ENCODE measurements at regions of chr1 and their contacts with region 1.

Region 1: GRCh38 chr1:160951443-160952128 is 3.0 kb downstream of the ITLN2 start:
- DNase-seq: peak; percentile 69
- ATAC-seq: peak; percentile 76

Region 2: DNA sequence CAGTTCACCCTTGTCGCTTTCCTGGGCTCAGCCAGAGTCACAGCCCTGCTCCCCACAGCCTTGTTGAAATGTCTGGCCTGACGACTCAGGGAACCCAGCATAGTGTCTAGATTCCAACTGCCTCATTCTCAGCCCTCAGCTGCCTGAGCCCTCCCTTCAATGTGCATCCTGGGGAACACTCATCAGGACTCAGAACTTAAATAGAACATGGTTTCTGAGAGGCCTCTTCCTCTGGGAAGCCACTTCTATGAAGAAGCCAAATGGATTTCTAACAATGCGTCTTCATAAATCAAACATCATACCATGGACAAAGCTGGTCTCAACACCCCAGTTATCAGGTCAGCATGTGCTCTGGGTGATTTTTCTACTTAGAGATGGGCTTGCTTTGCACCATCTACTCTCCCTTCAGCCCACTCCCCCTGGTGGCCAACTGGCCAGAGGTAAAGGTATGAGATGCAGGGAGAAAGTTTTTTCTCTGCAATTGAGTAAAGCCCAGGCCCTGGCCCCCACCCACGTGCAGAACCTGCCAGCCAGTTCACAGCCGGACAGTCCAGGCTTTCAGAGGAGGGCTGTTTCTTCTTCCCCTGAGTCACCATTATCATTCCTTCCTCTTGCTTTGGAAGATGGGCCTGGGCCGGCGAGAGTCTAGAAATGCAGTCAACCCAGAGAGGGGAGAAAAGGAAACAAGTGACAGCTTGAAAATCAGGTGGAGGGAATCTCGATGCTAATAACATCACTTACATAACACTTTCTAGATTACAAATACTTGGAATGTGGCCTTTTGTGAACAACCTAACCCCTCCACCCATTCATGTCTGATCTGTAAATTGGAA is 121.0 kb before region 1 on chr1:
- intact Hi-C with region 1: loop called (anchors 10 kb)
- DNase-seq: peak; percentile 67
- ATAC-seq: peak; percentile 33

Region 3: GRCh38 chr1:160901768-160902167 is 49.8 kb before region 1 on chr1:
- intact Hi-C with region 1: no loop called
- DNase-seq: no peak
- ATAC-seq: no peak

Measured in left ventricle myocardium superior (tissue), 1 donor.